Gastrocnemius medialis (tissue), 4 donors: ENCODE measurements at regions of chr22 and their contacts with region 1.

Region 1: DNA sequence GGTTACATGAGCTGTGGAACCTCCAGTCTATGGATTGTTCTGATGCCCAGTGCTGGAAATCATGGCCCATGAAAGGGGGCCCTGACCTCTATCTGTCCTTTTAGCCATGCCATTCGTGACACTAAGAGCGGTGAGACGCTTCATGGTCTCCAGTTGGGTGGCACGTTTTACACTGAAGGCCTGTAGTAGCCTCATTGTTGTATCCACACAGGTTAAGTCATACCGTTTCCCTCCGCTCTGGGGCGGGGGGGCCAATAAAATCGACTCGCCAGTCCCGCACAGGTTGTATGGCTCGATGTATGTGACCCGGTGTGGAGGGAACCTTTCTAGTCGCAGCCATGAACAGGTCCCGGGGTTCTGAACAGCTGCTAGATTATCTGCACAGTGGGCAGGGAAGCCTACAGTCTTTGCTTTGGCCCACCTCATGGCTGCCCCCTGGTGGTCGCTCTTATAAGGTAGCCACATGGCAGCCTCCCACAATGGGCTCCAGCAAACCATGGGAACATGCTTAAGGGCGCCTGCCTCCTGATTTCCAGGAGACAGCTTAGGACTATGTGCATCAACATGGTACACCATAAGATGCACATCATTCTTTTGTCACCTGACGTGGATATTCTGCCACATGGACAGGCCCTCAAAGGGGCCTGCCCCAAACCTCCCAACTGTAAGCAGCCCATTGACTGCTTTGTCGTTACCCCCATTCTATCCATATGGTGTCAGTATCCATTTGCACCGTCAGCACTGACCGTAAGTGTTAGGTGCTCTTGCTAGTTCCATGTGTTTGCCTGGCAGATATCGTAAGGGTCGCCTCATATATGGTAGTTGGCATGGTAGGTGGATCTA is 19.7 kb upstream of the APOL3 start:
- DNase-seq: peak; percentile 43 to 66
- ATAC-seq: peak; percentile 52 to 93
- H3K4me3 ChIP-seq: no peak overlapping the region
- H3K27ac ChIP-seq: no peak overlapping the region
- H3K4me1 ChIP-seq: peaks cover 0 to 5% of the 10 kb centered on the region in 2 donors
- H3K27me3 ChIP-seq: no peaks in the 10 kb centered on the region
- CTCF ChIP-seq: peak; percentile 59 to 83 (median 80)
- POLR2A ChIP-seq: no peak

Region 2: GRCh38 chr22:36136475-36136874 is 43.8 kb before region 1 on chr22:
- in situ Hi-C with region 1: loop called in 2 of 4 experiments (anchors 5 to 10 kb)
- intact Hi-C with region 1: no loop called
- DNase-seq: peak; percentile 29 to 55
- ATAC-seq: peak; percentile 34 to 41
- H3K4me3 ChIP-seq: no peak overlapping the region
- H3K27ac ChIP-seq: peak overlapping the region; percentile 41 to 55 (median 42)
- H3K4me1 ChIP-seq: no peaks in the 10 kb centered on the region
- H3K27me3 ChIP-seq: no peaks in the 10 kb centered on the region
- CTCF ChIP-seq: no peak
- POLR2A ChIP-seq: no peak